ENCODE measurements at regions of chr19 and their contacts with region 1.

Region 1: GRCh38 chr19:7680606-7681339 is at the start of gene TRAPPC5:
- DNase-seq: peak; percentile 90
- CTCF ChIP-seq: peak; percentile 98

Region 2: GRCh38 chr19:7562646-7563393 is 118.0 kb before region 1 on chr19:
- CTCF ChIA-PET with region 1: interaction called, 25 read pairs
- POLR2A ChIA-PET with region 1: no interaction called
- DNase-seq: peak; percentile 11
- CTCF ChIP-seq: no peak

Region 3: GRCh38 chr19:7652061-7652641 is 28.6 kb before region 1 on chr19:
- CTCF ChIA-PET with region 1: interaction called, 19 read pairs
- POLR2A ChIA-PET with region 1: no interaction called
- DNase-seq: peak; percentile 90
- CTCF ChIP-seq: peak; percentile 91

Region 4: DNA sequence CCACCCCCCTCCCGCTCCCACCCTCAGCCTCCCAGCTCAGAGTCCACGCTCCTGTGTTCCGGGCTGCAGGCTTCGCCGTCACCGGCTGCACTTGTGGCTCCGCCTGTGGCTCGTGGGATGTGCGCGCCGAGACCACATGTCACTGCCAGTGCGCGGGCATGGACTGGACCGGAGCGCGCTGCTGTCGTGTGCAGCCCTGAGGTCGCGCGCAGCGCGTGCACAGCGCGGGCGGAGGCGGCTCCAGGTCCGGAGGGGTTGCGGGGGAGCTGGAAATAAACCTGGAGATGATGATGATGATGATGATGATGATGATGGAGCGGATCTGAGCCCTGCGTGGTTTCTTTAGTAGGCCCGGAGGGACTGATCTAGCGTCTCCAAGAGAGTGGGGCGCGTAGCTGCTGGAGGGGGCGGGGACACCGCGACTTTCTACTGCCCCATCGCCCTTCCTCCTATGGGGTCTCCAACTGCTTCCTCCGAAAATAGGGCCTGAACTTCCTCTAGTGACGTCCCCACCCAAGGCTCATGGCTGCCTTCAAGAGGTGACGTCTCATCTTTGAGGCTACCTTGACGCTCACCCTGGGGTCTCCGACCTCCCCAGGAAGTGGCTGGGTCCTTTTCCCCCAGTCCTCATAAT is 10.5 kb before region 1 on chr19:
- CTCF ChIA-PET with region 1: interaction called, 20 read pairs
- POLR2A ChIA-PET with region 1: interaction called, 3 read pairs
- DNase-seq: no peak
- CTCF ChIP-seq: no peak

Region 5: GRCh38 chr19:7701654-7702457 is 21.1 kb after region 1 on chr19 and contains the start of gene FCER2:
- CTCF ChIA-PET with region 1: interaction called, 47 read pairs
- POLR2A ChIA-PET with region 1: interaction called, 5 read pairs
- DNase-seq: peak; percentile 75
- CTCF ChIP-seq: no peak

Region 6: GRCh38 chr19:7806876-7807275 is 126.1 kb after region 1 on chr19:
- CTCF ChIA-PET with region 1: interaction called, 14 read pairs
- POLR2A ChIA-PET with region 1: no interaction called
- DNase-seq: no peak
- CTCF ChIP-seq: no peak